Activated naive CD4-positive, alpha-beta T cell treated with anti-CD3 and anti-CD28 coated beads, Interleukin-2, amount 10 ng/mL, durations not matched to agents 7 days and 5 days (primary cell): ENCODE measurements at regions of chr4 and their contacts with region 1.

Region 1: DNA sequence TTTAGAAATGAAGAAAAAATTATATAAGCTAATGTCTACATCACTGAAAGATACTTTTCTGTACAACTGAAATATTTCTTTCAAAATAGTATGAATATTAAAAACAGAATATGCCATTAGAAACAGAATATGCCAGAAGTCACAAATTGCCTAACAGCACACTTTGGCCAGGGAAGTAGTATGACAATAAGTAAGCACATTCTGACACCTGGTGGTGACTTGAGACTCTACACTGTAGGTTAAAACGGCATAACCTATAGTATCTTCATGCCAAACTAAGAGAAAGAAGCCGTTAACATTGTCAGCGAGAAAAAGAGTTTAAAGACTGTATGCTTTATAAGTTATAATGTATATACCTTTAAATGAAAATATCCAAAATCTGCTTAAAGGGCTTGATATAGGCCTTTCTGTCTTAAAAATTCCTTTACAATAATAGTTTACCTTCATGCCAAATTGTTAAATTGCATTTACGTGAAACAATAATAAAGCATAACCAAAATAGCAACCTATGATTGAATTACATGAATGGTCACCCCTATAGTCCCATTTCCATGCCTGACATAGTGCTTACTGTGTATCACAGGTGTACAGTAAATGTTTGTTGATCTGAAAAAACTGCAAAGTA is 32.8 kb downstream of the FAM13A start:
- DNase-seq: peak; percentile 68
- H3K4me3 Mint-ChIP-seq: no peak overlapping the region
- H3K27ac Mint-ChIP-seq: no peak overlapping the region
- H3K4me1 Mint-ChIP-seq: peaks cover 24% of the 10 kb centered on the region
- H3K27me3 Mint-ChIP-seq: no peaks in the 10 kb centered on the region

Region 2: DNA sequence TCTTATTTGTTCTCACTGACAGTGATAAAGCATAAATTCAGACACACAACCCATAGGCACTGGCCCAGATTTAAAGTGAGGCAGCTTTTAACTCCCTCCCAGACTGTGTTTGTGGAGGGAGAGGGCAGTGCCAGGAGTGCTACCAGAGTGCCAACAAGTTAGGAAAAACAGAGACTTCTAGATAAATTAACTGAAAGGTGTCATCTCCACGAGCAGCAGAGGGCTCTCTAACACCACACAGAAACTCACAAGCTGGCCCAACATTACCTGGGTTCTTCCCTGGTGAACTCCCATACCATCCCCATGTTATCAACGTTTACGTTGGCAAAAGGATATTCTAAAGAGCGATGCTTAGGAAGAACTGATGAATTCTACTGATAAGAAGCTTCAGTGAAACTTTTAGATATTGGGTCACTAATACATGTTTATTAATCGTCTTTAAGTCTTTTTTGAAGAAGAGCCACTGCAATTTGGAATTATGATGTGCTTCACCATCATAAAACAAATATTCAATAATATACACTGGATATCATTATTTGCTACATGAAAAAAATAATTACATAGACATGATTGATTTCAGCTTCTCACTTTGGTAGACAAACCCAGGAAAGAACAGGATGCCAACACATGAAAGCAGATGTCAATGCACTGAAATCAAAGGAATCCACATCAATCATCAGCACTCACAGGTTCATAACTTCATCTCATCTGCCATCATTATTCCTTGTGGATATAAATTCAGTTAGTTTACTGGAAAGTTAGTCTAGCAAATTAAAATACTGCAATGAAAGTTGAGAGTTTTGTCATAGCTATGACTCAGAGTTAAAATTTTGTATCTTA is 205.3 kb before region 1 on chr4:
- CTCF ChIA-PET with region 1: interaction called, 166 read pairs
- DNase-seq: peak; percentile 70
- H3K4me3 Mint-ChIP-seq: peak overlapping the region; percentile 88
- H3K27ac Mint-ChIP-seq: peak overlapping the region; percentile 53
- H3K4me1 Mint-ChIP-seq: peaks cover 52% of the 10 kb centered on the region
- H3K27me3 Mint-ChIP-seq: no peaks in the 10 kb centered on the region

Region 3: GRCh38 chr4:89055157-89056080 is 31.3 kb after region 1 on chr4:
- CTCF ChIA-PET with region 1: no interaction called
- DNase-seq: no peak
- H3K4me3 Mint-ChIP-seq: no peak overlapping the region
- H3K27ac Mint-ChIP-seq: no peak overlapping the region
- H3K4me1 Mint-ChIP-seq: peaks cover 13% of the 10 kb centered on the region
- H3K27me3 Mint-ChIP-seq: no peaks in the 10 kb centered on the region